ENCODE measurements at regions of chr7 and their contacts with region 1.

Region 1: DNA sequence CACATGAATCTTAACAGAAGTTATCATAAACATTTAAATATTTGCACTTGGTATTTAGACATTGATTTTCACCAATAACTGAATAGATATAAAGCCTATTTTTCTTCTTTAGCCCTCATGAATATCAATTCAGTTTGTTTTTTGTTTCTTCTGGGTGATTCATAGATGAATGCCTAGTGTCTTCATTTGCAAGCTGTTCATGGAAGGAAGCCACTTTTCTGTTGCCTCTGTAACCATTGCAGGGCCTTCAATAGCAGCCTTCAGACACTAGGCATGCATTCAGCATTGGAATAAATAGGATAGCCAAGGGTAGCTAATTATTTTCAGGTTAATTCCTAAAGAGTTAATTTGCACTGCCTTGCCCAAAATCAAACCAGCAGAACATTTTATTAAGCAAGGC is 375.3 kb downstream of the DPP6 start:
- DNase-seq: peak in 1 of 10 donors; percentile 47
- H3K4me3 ChIP-seq: peak overlapping the region in 2 of 59 donors; percentile 6 to 12
- H3K27ac ChIP-seq: peak overlapping the region; percentile 7 to 97 (median 85)
- H3K27me3 ChIP-seq: no peaks in the 10 kb centered on the region
- CTCF ChIP-seq: peak in 22 of 56 donors; percentile 11 to 46 (median 22)

Region 2: GRCh38 chr7:154474903-154475520 is 47.5 kb after region 1 on chr7:
- intact Hi-C with region 1: loop called (anchors 5 kb)
- DNase-seq: no peak
- H3K4me3 ChIP-seq: peak overlapping the region in 2 of 59 donors; percentile 24 to 32
- H3K27ac ChIP-seq: peak overlapping the region in 50 of 59 donors; percentile 39 to 94 (median 80)
- H3K27me3 ChIP-seq: no peaks in the 10 kb centered on the region
- CTCF ChIP-seq: no peak

Region 3: DNA sequence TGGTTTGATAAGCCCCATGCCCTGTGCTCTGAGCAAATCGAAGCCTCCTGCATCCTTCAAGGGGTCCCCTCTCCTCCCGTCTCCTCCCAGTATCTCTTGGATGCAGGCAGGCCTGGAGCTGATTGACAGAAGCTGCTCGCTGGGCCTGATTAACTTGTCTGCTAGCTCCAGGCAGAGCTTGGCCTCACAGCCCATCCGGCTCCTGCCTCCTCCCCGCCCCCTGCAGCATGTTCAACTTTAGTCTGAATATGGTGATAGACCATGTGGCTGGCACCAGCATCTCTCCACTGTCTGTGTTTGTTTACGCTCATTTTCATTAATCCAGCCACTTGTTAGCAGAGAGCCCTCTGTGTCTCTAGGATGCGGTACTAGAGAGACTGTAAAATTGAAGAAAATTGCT is 56.9 kb after region 1 on chr7:
- intact Hi-C with region 1: loop called (anchors 5 kb)
- DNase-seq: peak; percentile 64 to 94 (median 87)
- H3K4me3 ChIP-seq: peak overlapping the region in 5 of 59 donors; percentile 2 to 41 (median 10)
- H3K27ac ChIP-seq: peak overlapping the region; percentile 58 to 98 (median 92)
- H3K27me3 ChIP-seq: no peaks in the 10 kb centered on the region
- CTCF ChIP-seq: peak in 28 of 56 donors; percentile 5 to 59 (median 28)

Region 4: GRCh38 chr7:154503962-154504550 is 76.5 kb after region 1 on chr7:
- intact Hi-C with region 1: loop called in 1 of 2 experiments (anchors 5 kb)
- DNase-seq: no peak
- H3K4me3 ChIP-seq: peak overlapping the region in 1 of 59 donors; percentile 10
- H3K27ac ChIP-seq: no peak overlapping the region
- H3K27me3 ChIP-seq: no peaks in the 10 kb centered on the region
- CTCF ChIP-seq: peak; percentile 59 to 91 (median 78)

Region 5: GRCh38 chr7:154698726-154699291 is 271.3 kb after region 1 on chr7:
- intact Hi-C with region 1: no loop called
- DNase-seq: no peak
- H3K4me3 ChIP-seq: no peak overlapping the region
- H3K27ac ChIP-seq: no peak overlapping the region
- H3K27me3 ChIP-seq: no peaks in the 10 kb centered on the region
- CTCF ChIP-seq: peak in 51 of 56 donors; percentile 28 to 76 (median 49)

Measured in dorsolateral prefrontal cortex (tissue), 120 donors.